Body of pancreas (tissue), 4 donors: ENCODE measurements at regions of chr3 and their contacts with region 1.

Region 1: GRCh38 chr3:146326670-146327543 is 76.0 kb upstream of the PLSCR4 start:
- DNase-seq: peak; percentile 41 to 66 (median 51)
- ATAC-seq: peak; percentile 86
- H3K4me3 ChIP-seq: no peak overlapping the region
- H3K27ac ChIP-seq: no peak overlapping the region
- H3K4me1 ChIP-seq: no peaks in the 10 kb centered on the region
- H3K27me3 ChIP-seq: no peaks in the 10 kb centered on the region
- CTCF ChIP-seq: peak in 6 of 7 experiments; percentile 37 to 86 (median 78)
- POLR2A ChIP-seq: no peak

Region 2: DNA sequence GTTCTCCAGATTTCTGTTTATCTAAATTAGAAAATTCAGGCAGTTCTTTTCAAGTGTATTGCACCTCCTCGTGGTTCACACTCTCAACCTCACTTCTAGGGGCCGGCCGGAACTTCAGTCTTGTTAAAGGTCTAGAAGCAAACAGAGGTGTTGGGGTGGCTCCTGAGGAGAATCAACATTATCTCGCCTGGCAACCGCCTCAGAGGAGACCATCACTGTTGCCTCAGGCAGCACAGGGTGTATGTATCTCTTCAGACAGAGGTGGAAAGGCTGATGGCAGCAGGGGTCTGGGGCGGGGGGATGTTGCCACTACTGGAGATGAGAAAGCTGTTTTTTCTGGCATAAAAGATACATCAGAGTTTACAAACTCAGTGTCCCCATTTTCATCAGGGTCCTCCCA is 1097.3 kb before region 1 on chr3:
- intact Hi-C with region 1: no loop called
- DNase-seq: no peak
- ATAC-seq: no peak
- H3K4me3 ChIP-seq: no peak overlapping the region
- H3K27ac ChIP-seq: no peak overlapping the region
- H3K4me1 ChIP-seq: no peaks in the 10 kb centered on the region
- H3K27me3 ChIP-seq: no peaks in the 10 kb centered on the region
- CTCF ChIP-seq: no peak
- POLR2A ChIP-seq: no peak

Region 3: GRCh38 chr3:146065573-146066006 is 261.3 kb before region 1 on chr3:
- intact Hi-C with region 1: loop called (anchors 10 kb)
- DNase-seq: peak in 2 of 4 donors; percentile 11 to 44
- ATAC-seq: no peak
- H3K4me3 ChIP-seq: no peak overlapping the region
- H3K27ac ChIP-seq: no peak overlapping the region
- H3K4me1 ChIP-seq: no peaks in the 10 kb centered on the region
- H3K27me3 ChIP-seq: no peaks in the 10 kb centered on the region
- CTCF ChIP-seq: peak; percentile 48 to 92 (median 76)
- POLR2A ChIP-seq: no peak

Region 4: GRCh38 chr3:146218880-146219866 is 107.7 kb before region 1 on chr3:
- intact Hi-C with region 1: loop called (anchors 10 kb)
- DNase-seq: peak; percentile 20 to 56 (median 38)
- ATAC-seq: no peak
- H3K4me3 ChIP-seq: no peak overlapping the region
- H3K27ac ChIP-seq: no peak overlapping the region
- H3K4me1 ChIP-seq: peaks cover 24% of the 10 kb centered on the region
- H3K27me3 ChIP-seq: no peaks in the 10 kb centered on the region
- CTCF ChIP-seq: peak; percentile 63 to 78 (median 71)
- POLR2A ChIP-seq: no peak

Region 5: DNA sequence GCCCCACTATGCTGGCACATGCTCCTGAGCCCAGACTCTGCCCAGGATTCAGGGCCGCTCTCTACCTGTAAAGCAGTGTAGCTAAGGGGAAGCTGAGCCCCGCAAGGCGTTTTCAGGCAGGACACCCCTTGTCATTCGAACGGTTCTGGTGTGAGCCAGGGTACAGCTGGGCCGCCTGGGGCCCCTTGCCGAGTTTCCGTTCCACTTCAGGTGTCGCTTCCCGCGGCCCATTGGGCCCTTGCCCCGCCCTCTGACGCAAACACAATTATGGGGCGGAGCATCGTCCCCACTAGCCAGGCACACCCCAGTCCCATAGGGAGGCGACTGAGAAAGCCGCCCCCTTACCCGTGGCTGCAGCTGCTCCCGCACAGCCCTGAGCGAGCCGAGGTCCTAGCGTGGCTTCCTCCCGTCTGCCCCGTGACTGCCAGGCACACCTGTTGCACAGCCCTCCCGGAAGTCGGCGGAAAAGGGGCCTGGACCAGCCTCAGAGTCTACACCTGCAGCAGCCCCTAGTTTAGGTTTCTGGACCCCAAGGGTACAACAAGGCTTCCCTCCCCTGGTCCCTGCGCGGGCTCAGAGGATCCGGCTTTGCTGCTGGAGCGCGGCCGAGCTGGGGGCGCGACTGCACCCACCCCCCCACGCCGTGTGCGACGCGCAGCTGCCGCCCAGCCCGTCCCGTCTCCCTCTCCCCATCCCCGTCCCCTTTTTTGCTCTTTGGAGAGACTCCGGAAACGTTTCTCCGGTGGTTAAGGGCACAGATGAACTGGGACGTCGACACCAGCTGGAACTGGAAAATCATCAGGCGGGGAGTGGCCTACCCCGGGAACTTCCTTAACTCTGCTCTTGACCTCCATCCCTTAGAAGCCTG is 142.5 kb after region 1 on chr3 and contains the start of gene PLSCR2:
- intact Hi-C with region 1: no loop called
- DNase-seq: peak; percentile 89 to 94 (median 90)
- ATAC-seq: peak; percentile 96
- H3K4me3 ChIP-seq: peak within 1 kb of the TSS; percentile 32 to 58
- H3K27ac ChIP-seq: peak within 1 kb of the TSS; percentile 95 to 98 (median 96)
- H3K4me1 ChIP-seq: peaks cover 23% of the 10 kb centered on the region
- H3K27me3 ChIP-seq: no peaks in the 10 kb centered on the region
- CTCF ChIP-seq: no peak
- POLR2A ChIP-seq: peak; percentile 87 to 96 (median 94)
- total RNA-seq, gene PLSCR2: not detected